Psoas muscle (tissue), 8 donors: ENCODE measurements at regions of chr12 and their contacts with region 1.

Region 1: DNA sequence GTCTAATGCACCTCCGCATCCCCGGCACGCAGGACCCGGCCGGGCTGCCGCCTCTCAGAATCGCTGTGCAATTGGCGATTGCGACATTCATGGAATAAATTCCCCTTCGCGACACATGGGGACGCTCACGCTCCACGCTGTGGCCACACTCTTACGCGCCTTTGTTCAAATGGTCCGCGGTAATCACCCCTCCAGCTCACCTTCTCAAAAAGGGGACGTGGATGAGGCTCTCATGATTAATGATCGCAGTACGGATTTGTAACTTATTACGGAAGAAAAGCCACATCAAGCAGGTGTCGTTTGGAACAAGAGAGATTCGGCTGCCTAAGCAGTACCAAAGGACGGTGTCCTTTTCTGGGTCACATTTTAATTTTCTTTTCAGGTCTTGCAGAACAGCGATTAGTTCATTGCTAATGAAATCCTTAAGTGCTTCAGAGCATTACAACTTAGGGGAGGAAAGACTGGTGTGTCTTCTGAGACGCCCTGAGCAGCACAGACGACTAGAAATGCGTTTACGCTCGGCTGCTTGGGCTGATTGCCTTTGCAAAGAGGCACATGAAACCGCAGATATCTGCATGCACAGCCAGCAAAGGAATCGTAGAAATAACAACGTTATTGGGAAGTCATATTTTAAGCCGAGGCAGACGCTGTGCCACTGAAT is 37.3 kb upstream of the ADGRD1 start:
- DNase-seq: peak; percentile 28 to 71
- ATAC-seq: peak; percentile 66 to 86 (median 80)
- H3K4me3 ChIP-seq: peak overlapping the region; percentile 30
- H3K27ac ChIP-seq: no peak overlapping the region
- H3K4me1 ChIP-seq: no peaks in the 10 kb centered on the region
- H3K27me3 ChIP-seq: peaks cover 0 to 19% (median 4%) of the 10 kb centered on the region in 3 donors
- CTCF ChIP-seq: peak; percentile 82

Region 2: GRCh38 chr12:131132118-131132892 is 215.9 kb after region 1 on chr12:
- intact Hi-C with region 1: loop called in 1 of 2 experiments (anchors 2 kb)
- DNase-seq: peak; percentile 68 to 82
- ATAC-seq: peak; percentile 25 to 70 (median 46)
- H3K4me3 ChIP-seq: no peak overlapping the region
- H3K27ac ChIP-seq: no peak overlapping the region
- H3K4me1 ChIP-seq: no peaks in the 10 kb centered on the region
- H3K27me3 ChIP-seq: no peaks in the 10 kb centered on the region
- CTCF ChIP-seq: peak; percentile 67